GM18951 (cell line): ENCODE measurements at regions of chr11 and their contacts with region 1.

Region 1: DNA sequence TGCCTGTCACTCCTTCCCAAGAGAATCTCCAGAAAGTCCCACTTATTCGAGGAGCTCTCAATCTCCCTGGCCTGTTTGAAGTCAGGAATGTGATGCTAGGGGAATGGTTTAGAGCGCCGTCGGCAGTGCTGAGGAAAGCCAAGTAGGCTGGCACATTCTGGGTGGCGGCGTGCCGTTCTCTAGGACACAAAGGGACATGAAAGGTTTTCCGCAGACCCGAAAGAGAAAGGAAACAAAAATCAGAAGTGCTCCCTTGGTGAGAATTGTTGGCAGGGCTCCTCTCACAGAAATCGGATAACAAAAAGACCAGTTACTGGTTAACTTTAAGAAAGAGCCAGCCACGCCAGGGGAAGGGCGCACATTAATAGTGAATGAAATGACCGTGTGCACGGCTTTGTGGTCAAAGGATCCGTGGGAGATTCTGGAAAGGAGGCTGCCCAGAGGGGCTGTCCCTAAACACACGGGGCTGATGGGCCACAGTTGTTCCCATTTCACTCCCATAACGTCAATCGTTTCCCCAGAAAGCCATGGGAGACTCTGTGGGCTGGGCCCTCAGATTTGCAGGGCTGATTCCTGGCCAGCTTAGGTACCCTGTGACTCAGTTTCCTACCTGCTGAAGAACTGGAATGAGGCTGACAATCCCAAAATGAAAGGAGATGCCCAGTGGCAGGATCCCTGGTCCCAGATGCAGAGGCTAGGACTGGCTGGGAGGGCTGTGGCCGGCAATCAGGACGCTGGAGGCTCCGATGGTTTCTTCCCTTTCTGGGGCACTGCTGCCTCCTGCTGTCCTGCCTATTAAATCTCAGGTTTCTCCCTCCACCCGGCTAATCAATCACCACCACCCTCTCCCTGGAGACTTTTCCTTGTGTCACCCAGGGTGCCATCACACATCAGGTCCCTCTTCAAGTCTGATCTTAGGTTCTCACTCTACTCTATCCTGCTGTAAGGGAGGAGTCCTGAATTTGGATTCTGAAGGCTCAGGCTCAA is 82.3 kb downstream of the RCN1 start:
- POLR2A ChIP-seq: no peak

Region 2: GRCh38 chr11:32056438-32056837 is 116.7 kb before region 1 on chr11:
- in situ Hi-C with region 1: loop called (anchors 5 kb)
- POLR2A ChIP-seq: no peak